Naive thymus-derived CD8-positive, alpha-beta T cell (primary cell): ENCODE measurements at regions of chr10 and their contacts with region 1.

Region 1: DNA sequence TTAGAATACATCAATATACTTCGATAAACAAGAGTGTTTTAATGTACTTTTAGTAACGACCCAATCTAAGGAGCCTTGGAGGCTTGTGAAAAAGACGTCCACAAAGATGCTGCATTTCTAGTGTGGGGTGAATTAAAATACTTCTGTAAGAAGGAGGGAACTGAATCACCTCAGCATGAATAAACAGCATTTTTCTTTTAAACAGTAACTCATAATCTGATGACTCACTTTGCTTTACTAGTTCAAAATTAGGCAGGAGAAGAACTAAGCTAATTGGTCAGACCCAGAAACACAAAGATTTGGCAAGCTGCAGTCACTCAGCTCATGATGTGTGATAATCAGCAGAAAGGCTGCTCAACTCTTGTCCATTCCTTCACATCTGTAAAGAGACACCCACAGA is 24.2 kb downstream of the NCOA4 start:
- DNase-seq: no peak
- ATAC-seq: no peak
- H3K4me3 Mint-ChIP-seq: no peak overlapping the region
- H3K27ac Mint-ChIP-seq: peak overlapping the region in 4 of 10 donors; percentile 13 to 50 (median 30)
- H3K4me1 Mint-ChIP-seq: peaks cover 0 to 5% (median 2%) of the 10 kb centered on the region in 4 donors
- H3K27me3 Mint-ChIP-seq: no peaks in the 10 kb centered on the region

Region 2: DNA sequence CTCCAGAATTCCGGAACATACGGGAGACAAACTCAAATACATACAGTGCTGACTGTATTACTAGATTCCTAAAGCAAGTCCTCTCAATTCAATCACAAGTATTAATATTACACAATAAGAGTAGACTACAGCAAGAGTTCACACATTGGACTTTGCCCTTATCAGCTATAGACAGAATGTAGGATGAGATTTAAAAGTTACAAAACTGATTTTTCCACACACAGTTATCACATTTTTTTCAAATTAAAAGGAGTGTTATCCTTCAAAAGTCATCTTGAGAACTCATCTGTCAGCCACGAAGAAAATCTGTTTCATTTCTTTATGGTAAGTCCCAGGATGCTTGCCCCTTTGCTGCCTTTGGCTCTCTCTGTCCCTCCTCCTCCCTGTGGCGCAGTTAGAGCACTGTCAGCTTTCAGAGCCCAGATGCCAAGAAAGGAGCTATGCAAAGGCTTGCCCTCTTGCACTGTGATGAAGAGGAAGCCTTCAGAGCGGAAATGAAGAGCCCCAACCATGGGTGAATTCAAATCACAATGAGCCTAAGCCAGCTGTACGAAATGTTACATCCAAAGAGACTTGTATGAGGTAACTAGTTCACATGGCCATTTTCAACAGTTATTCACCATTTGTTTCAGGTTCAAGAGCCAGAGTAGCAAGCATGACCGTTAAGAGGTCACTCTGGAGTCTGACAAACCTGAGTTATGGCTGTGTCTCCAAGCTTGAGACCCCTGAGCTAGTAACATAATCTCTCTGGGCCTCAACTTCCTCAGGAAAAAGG is 13.5 kb after region 1 on chr10:
- POLR2A ChIA-PET with region 1: interaction called, 10 read pairs
- DNase-seq: peak in 2 of 10 donors; percentile 28 to 29
- ATAC-seq: peak; percentile 23 to 56
- H3K4me3 Mint-ChIP-seq: peak overlapping the region in 9 of 10 donors; percentile 27 to 81 (median 63)
- H3K27ac Mint-ChIP-seq: peak overlapping the region; percentile 51 to 92 (median 85)
- H3K4me1 Mint-ChIP-seq: peaks cover 30 to 82% (median 75%) of the 10 kb centered on the region in 4 donors
- H3K27me3 Mint-ChIP-seq: no peaks in the 10 kb centered on the region